Dendritic cell treated with granulocyte-macrophage colony-stimulating factor and Interleukin-4, amounts not matched to agents 40 ng/mL and 50 ng/mL, for 4 days (primary cell): ENCODE measurements at regions of chr15 and their contacts with region 1.

Region 1: GRCh38 chr15:64841258-64842095 is at the start of gene PLEKHO2:
- H3K4me3 Mint-ChIP-seq: peak within 1 kb of the TSS; percentile 90
- H3K27ac Mint-ChIP-seq: peak within 1 kb of the TSS; percentile 87
- H3K4me1 Mint-ChIP-seq: peaks cover 69% of the 10 kb centered on the region
- H3K27me3 Mint-ChIP-seq: no peaks in the 10 kb centered on the region

Region 2: GRCh38 chr15:64681424-64682024 is 160.0 kb before region 1 on chr15:
- intact Hi-C with region 1: no loop called
- H3K4me3 Mint-ChIP-seq: no peak overlapping the region
- H3K27ac Mint-ChIP-seq: no peak overlapping the region
- H3K4me1 Mint-ChIP-seq: peaks cover 11% of the 10 kb centered on the region
- H3K27me3 Mint-ChIP-seq: no peaks in the 10 kb centered on the region

Region 3: GRCh38 chr15:64825431-64826294 is 15.8 kb before region 1 on chr15 and contains the start of gene PIF1:
- intact Hi-C with region 1: loop called (anchors 2 kb)
- H3K4me3 Mint-ChIP-seq: peak within 1 kb of the TSS; percentile 72
- H3K27ac Mint-ChIP-seq: peak within 1 kb of the TSS; percentile 81
- H3K4me1 Mint-ChIP-seq: peaks cover 37% of the 10 kb centered on the region
- H3K27me3 Mint-ChIP-seq: peaks cover 21% of the 10 kb centered on the region

Region 4: GRCh38 chr15:64905119-64905831 is 63.8 kb after region 1 on chr15:
- intact Hi-C with region 1: loop called (anchors 2 kb)
- H3K4me3 Mint-ChIP-seq: peak overlapping the region; percentile 61
- H3K27ac Mint-ChIP-seq: peak overlapping the region; percentile 73
- H3K4me1 Mint-ChIP-seq: peaks cover 34% of the 10 kb centered on the region
- H3K27me3 Mint-ChIP-seq: peaks cover 12% of the 10 kb centered on the region

Region 5: DNA sequence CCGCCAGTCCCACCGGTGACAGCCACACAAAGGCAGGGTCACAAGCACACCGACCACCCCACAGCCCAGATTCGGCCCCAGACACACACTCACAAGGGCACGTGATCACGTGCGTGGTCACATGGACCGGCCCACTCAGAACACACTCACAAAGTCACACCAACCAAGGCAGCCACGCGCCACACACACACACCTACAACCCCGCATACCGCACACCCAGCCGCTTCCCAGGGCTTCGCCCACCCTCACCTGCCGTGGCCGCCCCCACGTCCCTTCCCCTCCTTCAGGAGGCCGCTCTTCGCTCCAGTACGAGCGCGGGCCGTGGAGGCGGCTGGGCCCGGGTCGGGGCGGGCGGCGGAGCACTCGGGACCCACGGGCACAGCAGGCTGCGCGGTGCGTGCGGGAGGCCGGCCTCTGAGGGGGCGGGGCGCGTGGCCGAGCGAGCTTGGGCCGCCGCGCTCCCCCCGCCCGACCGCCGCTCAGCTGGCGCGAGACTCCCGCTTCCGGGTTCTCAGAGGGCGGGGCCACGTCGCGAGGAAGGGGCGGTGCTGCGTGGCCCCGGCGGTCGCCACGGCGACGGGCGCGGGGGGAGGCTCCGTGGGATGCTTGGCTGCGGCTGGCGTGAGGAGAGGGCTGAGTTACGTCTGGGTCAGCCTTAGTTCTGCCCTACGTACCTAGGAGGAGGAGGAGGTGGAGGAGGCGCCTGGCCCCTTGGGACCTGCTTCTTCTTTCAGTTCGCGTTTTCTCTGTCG is 148.1 kb after region 1 on chr15 and contains the start of gene SPG21:
- intact Hi-C with region 1: loop called (anchors 5 kb)
- H3K4me3 Mint-ChIP-seq: peak within 1 kb of the TSS; percentile 95
- H3K27ac Mint-ChIP-seq: peak within 1 kb of the TSS; percentile 93
- H3K4me1 Mint-ChIP-seq: peaks cover 53% of the 10 kb centered on the region
- H3K27me3 Mint-ChIP-seq: no peaks in the 10 kb centered on the region